Mucosa of descending colon (tissue), 3 donors: ENCODE measurements at regions of chr2 and their contacts with region 1.

Region 1: GRCh38 chr2:182650704-182651103 is 65.4 kb upstream of the DNAJC10 start:
- DNase-seq: no peak
- ATAC-seq: peak; percentile 20
- H3K4me3 ChIP-seq: no peak overlapping the region
- H3K4me1 ChIP-seq: no peaks in the 10 kb centered on the region
- CTCF ChIP-seq: no peak

Region 2: DNA sequence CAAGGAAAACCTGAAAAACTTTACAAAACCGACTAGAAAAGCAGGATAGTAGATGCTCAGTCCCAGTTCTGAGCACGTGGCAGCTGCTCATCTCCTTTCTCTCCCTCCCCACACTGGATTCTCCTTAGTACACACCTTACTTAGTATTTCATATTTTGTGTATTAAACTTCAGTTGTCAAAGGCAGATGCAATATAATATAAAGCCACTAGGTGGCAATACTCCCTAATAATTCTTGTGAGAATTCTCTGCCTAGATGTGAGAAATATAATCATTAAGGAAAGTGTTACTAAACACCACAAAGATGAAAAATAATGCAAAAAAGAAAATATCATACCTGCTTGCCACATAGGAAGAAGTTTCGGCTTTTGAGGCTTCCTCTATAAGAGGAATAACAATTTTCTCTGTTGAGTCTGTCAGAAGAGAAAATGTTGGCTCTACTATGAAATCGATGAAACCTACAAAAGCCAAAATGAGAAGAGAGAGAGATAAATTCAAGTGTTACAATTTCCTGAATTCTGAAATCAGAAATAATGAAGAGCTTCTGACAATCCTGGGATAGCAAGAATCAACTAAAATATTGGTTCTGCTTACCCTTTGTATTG is 464.5 kb before region 1 on chr2:
- intact Hi-C with region 1: loop called (anchors 2 to 5 kb)
- DNase-seq: peak in 1 of 3 donors; percentile 14
- ATAC-seq: peak; percentile 52
- H3K4me3 ChIP-seq: no peak overlapping the region
- H3K4me1 ChIP-seq: no peaks in the 10 kb centered on the region
- CTCF ChIP-seq: peak; percentile 54

Region 3: DNA sequence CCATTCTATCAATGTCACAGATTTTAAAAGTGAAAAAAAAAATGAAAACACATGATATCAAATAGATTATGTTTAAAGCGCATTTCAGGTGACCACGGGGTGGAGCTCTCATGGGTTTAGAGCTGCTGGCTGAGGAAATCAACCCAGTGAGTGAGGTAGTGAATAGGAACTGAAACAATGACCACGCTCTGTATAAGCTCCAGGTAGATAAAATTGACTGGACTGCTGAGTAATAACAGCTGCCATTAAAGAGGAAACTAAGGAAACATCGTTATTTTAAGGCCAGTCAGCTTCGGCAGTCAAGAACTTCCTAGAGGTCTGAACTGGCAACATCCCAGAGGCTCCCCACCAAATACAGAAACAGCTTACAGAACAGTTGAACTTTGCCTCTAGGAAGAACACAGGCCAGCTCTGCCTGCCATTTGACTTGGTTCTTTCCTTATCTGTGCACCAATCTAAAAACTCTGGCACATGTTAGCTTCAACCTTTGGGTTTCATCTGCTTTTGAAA is 409.8 kb before region 1 on chr2:
- intact Hi-C with region 1: loop called in 1 of 2 experiments (anchors 5 kb)
- DNase-seq: peak in 2 of 3 donors; percentile 45 to 78
- ATAC-seq: peak; percentile 96
- H3K4me3 ChIP-seq: no peak overlapping the region
- H3K4me1 ChIP-seq: no peaks in the 10 kb centered on the region
- CTCF ChIP-seq: peak; percentile 10